ENCODE measurements at regions of chr2 and their contacts with region 1.

Region 1: GRCh38 chr2:74198461-74199274 is at the start of gene MTHFD2:
- DNase-seq: peak; percentile 50
- ATAC-seq: peak; percentile 97
- H3K4me3 ChIP-seq: peak within 1 kb of the TSS; percentile 63 to 99
- H3K27ac ChIP-seq: peak within 1 kb of the TSS; percentile 88
- H3K4me1 ChIP-seq: peaks cover 30% of the 10 kb centered on the region
- H3K27me3 ChIP-seq: no peaks in the 10 kb centered on the region
- CTCF ChIP-seq: peak; percentile 86
- total RNA-seq, gene MTHFD2: 215 TPM

Region 2: DNA sequence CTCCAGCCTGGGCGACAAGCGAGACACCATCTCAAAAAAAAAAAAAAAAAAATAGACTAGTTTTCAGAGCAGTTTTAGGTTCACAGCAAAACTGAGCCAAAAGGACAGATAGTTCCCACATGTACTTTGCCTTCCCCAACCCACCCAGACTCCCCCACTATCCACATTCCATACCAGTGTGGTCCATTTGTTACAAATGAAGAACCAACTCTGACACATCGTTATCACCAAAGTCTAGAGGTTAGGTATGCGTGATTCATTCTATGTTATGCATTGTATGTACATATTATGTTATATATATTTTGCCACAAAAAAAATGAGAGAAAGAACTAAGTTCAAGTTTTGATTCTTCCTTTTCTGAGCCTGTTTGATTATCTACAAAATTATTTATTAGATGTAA is 422.3 kb before region 1 on chr2:
- CTCF ChIA-PET with region 1: no interaction called
- POLR2A ChIA-PET with region 1: interaction called, 12 read pairs
- in situ Hi-C with region 1: no loop called
- intact Hi-C with region 1: no loop called
- DNase-seq: no peak
- ATAC-seq: no peak
- H3K4me3 ChIP-seq: no peak overlapping the region
- H3K27ac ChIP-seq: no peak overlapping the region
- H3K4me1 ChIP-seq: peaks cover 5% of the 10 kb centered on the region
- H3K27me3 ChIP-seq: no peaks in the 10 kb centered on the region
- CTCF ChIP-seq: no peak

Region 3: DNA sequence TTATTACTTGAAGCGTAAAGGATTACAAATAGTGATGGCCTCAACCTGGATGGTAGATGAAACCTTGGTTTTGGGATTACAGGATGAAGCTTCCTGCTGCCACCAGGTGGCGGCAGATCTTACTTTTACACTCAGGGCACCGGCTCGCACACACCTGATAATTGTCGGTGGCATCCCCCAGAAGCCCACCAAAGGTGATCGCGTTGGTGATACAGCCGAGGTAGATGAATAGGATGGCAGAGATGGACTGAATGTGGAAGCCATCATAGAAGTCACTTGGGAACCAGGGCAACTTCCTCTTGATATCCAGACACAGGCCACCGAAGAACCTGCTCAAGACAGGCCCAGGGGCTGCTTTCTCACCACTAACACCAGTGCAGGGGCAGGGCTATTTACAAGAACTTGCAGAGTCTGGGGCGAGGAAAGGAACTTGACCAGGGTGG is 51.5 kb after region 1 on chr2:
- CTCF ChIA-PET with region 1: no interaction called
- POLR2A ChIA-PET with region 1: no interaction called
- in situ Hi-C with region 1: no loop called
- intact Hi-C with region 1: no loop called
- DNase-seq: peak; percentile 17
- ATAC-seq: peak; percentile 83
- H3K4me3 ChIP-seq: no peak overlapping the region
- H3K27ac ChIP-seq: no peak overlapping the region
- H3K4me1 ChIP-seq: no peaks in the 10 kb centered on the region
- H3K27me3 ChIP-seq: no peaks in the 10 kb centered on the region
- CTCF ChIP-seq: peak; percentile 89

Measured in Panc1 (cell line).